SK-N-SH (cell line): ENCODE measurements at regions of chr5 and their contacts with region 1.

Region 1: GRCh38 chr5:149367249-149367971 is 9.6 kb downstream of the PCYOX1L start:
- DNase-seq: peak; percentile 87
- H3K4me3 ChIP-seq: no peak overlapping the region; a peak in 1 of 4 replicates
- H3K27ac ChIP-seq: no peak overlapping the region; a peak in 1 of 4 replicates
- H3K4me1 ChIP-seq: peaks cover 0 to 14% of the 10 kb centered on the region in 2 experiments; a peak in 1 of 4 replicates
- H3K27me3 ChIP-seq: no peaks in the 10 kb centered on the region
- CTCF ChIP-seq: peak; percentile 88
- EP300 ChIP-seq: no peak
- RAD21 ChIP-seq: peak; percentile 87

Region 2: DNA sequence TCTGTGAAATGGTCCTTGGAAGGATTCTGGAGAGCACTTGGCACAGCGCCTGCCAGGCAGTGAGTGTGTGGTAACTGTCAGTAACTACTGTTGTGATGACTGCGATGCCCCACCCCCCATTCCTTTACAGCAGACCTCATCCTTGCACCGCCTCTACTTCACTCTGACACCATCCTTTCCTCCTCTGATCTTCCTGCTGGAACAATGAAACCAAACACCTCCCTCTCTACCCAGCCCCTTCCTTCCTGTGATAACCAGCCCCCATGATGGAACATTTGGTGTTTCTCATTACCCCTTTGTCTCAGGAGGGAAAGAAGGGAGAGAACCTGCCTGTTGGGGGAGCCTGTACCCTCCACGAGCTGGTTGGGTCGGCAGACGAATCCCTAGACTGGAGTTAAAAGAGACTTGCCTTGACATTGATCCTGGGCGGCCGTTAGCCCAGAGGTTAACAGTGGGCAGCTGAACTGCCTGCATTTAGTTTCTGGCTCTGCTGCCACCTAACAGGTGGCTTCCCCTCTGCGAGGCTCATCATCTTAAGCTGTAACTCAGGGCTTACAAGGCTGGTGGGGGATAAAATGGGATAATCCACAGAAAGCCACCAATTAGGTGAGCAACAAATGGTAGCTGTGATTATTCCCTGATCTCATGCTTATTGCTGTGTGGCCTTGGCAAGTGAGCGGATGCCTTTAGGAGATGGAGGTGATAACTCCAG is 56.3 kb before region 1 on chr5:
- CTCF ChIA-PET with region 1: interaction called, 120 read pairs
- POLR2A ChIA-PET with region 1: no interaction called
- DNase-seq: no peak
- H3K4me3 ChIP-seq: no peak overlapping the region
- H3K27ac ChIP-seq: no peak overlapping the region
- H3K4me1 ChIP-seq: no peaks in the 10 kb centered on the region
- H3K27me3 ChIP-seq: no peaks in the 10 kb centered on the region
- CTCF ChIP-seq: no peak
- EP300 ChIP-seq: no peak
- RAD21 ChIP-seq: no peak

Region 3: DNA sequence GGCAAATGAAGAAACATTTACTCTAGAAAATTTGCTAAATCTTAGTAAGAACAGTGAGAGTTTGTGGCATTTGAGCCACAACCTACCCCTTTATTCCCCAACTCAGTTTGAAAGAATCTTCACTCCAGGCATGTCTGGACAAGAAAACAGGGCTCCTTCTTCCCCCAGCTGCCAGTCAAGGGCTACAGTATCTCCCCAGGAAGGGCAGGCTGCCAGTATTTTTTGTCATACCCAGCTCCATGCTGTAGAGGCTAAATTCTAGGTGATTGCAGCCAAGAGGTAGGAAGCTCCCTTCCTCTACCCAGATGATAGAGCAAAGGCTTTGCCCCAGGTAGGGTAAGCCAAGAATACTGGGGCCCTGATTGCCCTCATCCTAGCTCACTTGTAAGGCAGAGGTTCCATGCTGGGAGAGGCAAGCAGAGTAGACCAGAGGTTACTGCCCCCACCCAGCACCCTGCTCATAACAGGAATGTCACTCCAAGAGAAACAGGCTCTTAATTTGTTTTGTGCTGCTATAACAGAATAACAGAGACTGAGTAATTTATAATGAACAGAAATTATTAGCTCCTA is 42.2 kb before region 1 on chr5:
- CTCF ChIA-PET with region 1: interaction called, 120 read pairs
- POLR2A ChIA-PET with region 1: no interaction called
- DNase-seq: no peak
- H3K4me3 ChIP-seq: no peak overlapping the region
- H3K27ac ChIP-seq: no peak overlapping the region; a peak in 1 of 4 replicates
- H3K4me1 ChIP-seq: peaks cover 14 to 22% of the 10 kb centered on the region in 2 experiments
- H3K27me3 ChIP-seq: no peaks in the 10 kb centered on the region
- CTCF ChIP-seq: no peak
- EP300 ChIP-seq: no peak
- RAD21 ChIP-seq: no peak

Region 4: GRCh38 chr5:149352169-149352568 is 15.2 kb before region 1 on chr5:
- CTCF ChIA-PET with region 1: interaction called, 42 read pairs
- POLR2A ChIA-PET with region 1: no interaction called
- DNase-seq: no peak
- H3K4me3 ChIP-seq: no peak overlapping the region
- H3K27ac ChIP-seq: no peak overlapping the region
- H3K4me1 ChIP-seq: peaks cover 0 to 12% of the 10 kb centered on the region in 2 experiments; a peak in 3 of 4 replicates
- H3K27me3 ChIP-seq: no peaks in the 10 kb centered on the region
- CTCF ChIP-seq: no peak
- EP300 ChIP-seq: no peak
- RAD21 ChIP-seq: no peak

Region 5: GRCh38 chr5:149452007-149452664 is 84.7 kb after region 1 on chr5:
- CTCF ChIA-PET with region 1: interaction called, 1,751 read pairs
- POLR2A ChIA-PET with region 1: no interaction called
- DNase-seq: peak; percentile 37
- H3K4me3 ChIP-seq: no peak overlapping the region
- H3K27ac ChIP-seq: peak overlapping the region; percentile 61 to 93
- H3K4me1 ChIP-seq: peaks cover 17 to 38% of the 10 kb centered on the region in 2 experiments
- H3K27me3 ChIP-seq: no peaks in the 10 kb centered on the region
- CTCF ChIP-seq: no peak
- EP300 ChIP-seq: no peak; a peak in 1 of 4 replicates
- RAD21 ChIP-seq: no peak

Region 6: DNA sequence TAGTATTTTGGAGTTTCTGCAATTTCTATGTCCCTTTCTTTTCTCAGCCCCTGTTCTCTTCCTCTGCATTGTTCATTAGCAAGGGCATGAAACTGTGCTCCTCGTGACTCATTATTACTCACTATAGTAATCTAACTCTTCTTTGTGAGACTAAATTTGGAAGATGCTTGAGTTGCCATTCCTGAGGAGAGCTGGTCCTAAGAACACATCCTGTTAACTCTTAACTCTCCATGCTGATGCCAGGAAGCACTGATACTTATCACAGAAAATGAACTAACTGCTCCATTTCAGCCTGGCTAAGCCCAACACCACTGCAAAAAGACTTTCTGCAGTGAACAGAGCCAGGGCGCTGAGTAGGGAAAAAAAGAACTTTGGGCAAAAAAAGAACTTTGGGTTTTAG is 194.4 kb after region 1 on chr5:
- CTCF ChIA-PET with region 1: interaction called, 16 read pairs
- POLR2A ChIA-PET with region 1: no interaction called
- DNase-seq: peak; percentile 50
- H3K4me3 ChIP-seq: peak overlapping the region; percentile 19 to 42; a peak in 3 of 4 replicates
- H3K27ac ChIP-seq: peak overlapping the region; percentile 88 to 98
- H3K4me1 ChIP-seq: peaks cover 10 to 28% of the 10 kb centered on the region in 2 experiments
- H3K27me3 ChIP-seq: no peaks in the 10 kb centered on the region
- CTCF ChIP-seq: no peak
- EP300 ChIP-seq: peak; percentile 39 to 83; a peak in 3 of 4 replicates
- RAD21 ChIP-seq: no peak

Region 7: GRCh38 chr5:149618581-149619251 is 251.3 kb after region 1 on chr5:
- CTCF ChIA-PET with region 1: interaction called, 11 read pairs
- POLR2A ChIA-PET with region 1: no interaction called
- DNase-seq: peak; percentile 78
- H3K4me3 ChIP-seq: no peak overlapping the region; a peak in 1 of 4 replicates
- H3K27ac ChIP-seq: no peak overlapping the region
- H3K4me1 ChIP-seq: peaks cover 5 to 14% of the 10 kb centered on the region in 2 experiments; a peak in 1 of 4 replicates
- H3K27me3 ChIP-seq: no peaks in the 10 kb centered on the region
- CTCF ChIP-seq: peak; percentile 79
- EP300 ChIP-seq: no peak
- RAD21 ChIP-seq: peak; percentile 80